Activated T-helper 2 cell treated with anti-CD3 and anti-CD28 coated beads, Interferon-gamma antibody, Interleukin-2, Interleukin-4, amounts not matched to agents 10 μg/mL and 5 μg/mL and 100 μg/mL, durations not matched to agents 14 hours and 24 hours and 36 hours (primary cell): ENCODE measurements at regions of chr6 and their contacts with region 1.

Region 1: GRCh38 chr6:21402368-21402767 is 191.2 kb upstream of the SOX4 start:
- DNase-seq: no peak
- H3K4me3 Mint-ChIP-seq: no peak overlapping the region
- H3K27ac Mint-ChIP-seq: peak overlapping the region; percentile 8
- H3K4me1 Mint-ChIP-seq: peaks cover 15% of the 10 kb centered on the region
- H3K27me3 Mint-ChIP-seq: peaks cover 6% of the 10 kb centered on the region

Region 2: DNA sequence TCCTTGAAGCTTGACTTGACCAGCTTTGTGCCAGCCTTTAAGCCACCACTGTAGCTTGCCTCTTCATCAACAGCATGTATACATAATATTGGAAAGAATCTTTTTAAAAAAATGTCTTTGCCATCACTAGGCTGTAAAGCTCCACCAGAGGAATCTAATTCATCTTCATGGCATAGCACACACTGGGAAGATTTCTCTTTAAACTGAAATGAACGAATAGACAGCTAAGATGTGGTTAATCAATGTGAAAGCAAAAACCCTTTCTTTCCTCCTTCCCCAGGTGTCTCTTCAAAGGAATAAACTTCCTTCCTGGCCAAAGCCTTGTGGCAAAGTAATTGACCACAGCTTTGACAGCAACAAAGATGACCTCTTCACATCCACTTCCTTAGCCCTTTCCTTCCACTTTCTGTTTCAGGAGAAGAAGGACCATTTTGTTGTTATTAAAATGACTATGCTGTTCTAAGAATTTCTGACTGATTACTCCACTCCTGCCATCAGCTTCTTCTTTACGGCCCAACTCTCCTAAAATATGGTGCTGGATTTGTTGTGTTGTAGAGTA is 237.5 kb before region 1 on chr6:
- intact Hi-C with region 1: loop called (anchors 10 kb)
- DNase-seq: no peak
- H3K4me3 Mint-ChIP-seq: no peak overlapping the region
- H3K27ac Mint-ChIP-seq: peak overlapping the region; percentile 44
- H3K4me1 Mint-ChIP-seq: peaks cover 34% of the 10 kb centered on the region
- H3K27me3 Mint-ChIP-seq: no peaks in the 10 kb centered on the region

Region 3: GRCh38 chr6:21199262-21199661 is 203.1 kb before region 1 on chr6:
- intact Hi-C with region 1: no loop called
- DNase-seq: no peak
- H3K4me3 Mint-ChIP-seq: no peak overlapping the region
- H3K27ac Mint-ChIP-seq: no peak overlapping the region
- H3K4me1 Mint-ChIP-seq: peaks cover 6% of the 10 kb centered on the region
- H3K27me3 Mint-ChIP-seq: no peaks in the 10 kb centered on the region